GM13977 (cell line): ENCODE measurements at regions of chr1 and their contacts with region 1.

Region 1: GRCh38 chr1:244272471-244273261 is 179.0 kb downstream of the ADSS2 start:
- DNase-seq: peak; percentile 75
- CTCF ChIP-seq: peak; percentile 97

Region 2: DNA sequence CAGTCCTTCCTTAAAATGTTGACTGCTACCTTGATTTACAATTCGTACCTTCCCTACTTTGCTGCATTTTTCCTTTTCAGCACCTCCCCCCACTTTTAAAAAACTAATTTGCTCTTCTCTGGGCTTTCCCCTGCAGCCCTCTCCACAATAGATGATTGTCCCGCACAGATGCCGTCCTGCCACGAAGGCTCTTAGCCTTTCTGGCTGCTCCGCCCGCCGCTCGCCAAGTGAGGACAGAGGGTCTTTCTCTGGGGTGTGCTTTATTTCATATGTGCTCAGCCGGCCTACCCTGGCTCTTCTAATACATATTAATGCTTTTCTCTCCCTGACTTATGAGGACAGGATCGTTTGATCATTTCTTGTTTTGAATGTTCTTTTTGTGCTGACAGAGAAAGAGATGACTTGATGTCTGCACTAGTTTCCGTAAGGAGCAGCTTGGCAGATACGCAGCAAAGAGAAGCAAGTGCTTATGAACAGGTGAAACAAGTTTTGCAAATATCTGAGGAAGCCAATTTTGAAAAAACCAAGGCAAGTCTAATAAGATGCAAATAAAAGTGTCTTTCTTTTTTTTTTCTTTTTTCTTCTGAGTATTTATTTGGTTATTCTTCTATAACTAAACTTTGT is 956.2 kb before region 1 on chr1:
- in situ Hi-C with region 1: no loop called
- DNase-seq: no peak
- CTCF ChIP-seq: no peak

Region 3: GRCh38 chr1:243713470-243714186 is 559.0 kb before region 1 on chr1:
- in situ Hi-C with region 1: loop called (anchors 25 kb)
- DNase-seq: no peak
- CTCF ChIP-seq: no peak

Region 4: DNA sequence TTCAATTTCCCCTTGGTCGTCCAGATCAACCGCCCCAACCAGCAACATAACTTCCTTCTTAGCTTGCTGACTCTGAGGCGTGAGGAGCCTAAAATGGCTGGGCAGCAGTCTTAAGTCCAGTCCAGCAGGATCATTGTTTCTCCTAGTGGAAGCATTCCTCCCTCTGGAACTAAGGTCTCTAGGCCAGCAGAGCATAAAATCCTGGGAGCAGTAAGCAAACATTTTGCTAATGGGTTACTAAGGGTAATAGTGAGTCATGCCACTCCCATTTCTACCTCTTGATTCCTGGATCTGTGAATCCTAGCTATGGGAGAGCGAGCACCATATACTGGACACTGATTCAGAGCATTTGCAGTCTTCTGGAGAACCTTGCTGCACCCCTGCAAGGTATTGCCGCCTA is 119.1 kb after region 1 on chr1:
- in situ Hi-C with region 1: no loop called
- DNase-seq: no peak
- CTCF ChIP-seq: no peak

Region 5: GRCh38 chr1:244839656-244840055 is 567.0 kb after region 1 on chr1:
- in situ Hi-C with region 1: no loop called
- DNase-seq: no peak
- CTCF ChIP-seq: no peak

Region 6: DNA sequence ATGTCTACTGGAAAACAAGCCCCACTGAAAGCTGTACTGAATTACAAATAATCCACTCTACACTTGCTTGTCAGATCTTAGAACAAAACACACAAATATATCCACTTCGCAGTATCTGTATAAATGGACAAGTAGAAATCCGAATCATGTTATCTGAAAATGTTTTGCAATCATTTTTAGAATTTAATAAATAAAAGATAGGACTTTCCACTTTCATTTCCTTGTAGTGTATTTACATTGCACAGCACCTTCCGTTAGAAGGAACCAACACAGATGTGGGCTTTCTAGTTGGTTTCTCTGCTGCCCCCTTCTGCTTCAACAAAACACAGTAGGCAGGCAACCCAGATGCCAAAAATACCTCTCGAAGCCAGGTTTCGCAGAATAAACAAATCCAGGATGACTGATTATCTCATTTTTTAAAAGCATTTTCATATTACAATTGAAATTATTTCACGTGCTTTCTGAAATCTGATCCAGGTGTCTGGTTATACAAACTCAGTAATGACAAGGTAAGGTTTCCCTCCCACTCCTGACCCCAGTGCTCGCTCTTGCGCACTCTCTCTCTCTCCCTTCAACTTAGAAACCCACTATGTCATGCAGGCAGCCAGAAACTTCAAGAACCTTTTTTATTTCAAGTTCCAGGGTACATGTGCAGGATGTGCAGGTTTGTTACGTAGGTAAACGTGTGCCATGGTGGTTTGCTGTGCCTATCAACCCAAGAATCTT is 1844.6 kb after region 1 on chr1:
- in situ Hi-C with region 1: no loop called
- DNase-seq: peak; percentile 55
- CTCF ChIP-seq: peak; percentile 56